CD4-positive, alpha-beta memory T cell (primary cell): ENCODE measurements at regions of chr19 and their contacts with region 1.

Region 1: DNA sequence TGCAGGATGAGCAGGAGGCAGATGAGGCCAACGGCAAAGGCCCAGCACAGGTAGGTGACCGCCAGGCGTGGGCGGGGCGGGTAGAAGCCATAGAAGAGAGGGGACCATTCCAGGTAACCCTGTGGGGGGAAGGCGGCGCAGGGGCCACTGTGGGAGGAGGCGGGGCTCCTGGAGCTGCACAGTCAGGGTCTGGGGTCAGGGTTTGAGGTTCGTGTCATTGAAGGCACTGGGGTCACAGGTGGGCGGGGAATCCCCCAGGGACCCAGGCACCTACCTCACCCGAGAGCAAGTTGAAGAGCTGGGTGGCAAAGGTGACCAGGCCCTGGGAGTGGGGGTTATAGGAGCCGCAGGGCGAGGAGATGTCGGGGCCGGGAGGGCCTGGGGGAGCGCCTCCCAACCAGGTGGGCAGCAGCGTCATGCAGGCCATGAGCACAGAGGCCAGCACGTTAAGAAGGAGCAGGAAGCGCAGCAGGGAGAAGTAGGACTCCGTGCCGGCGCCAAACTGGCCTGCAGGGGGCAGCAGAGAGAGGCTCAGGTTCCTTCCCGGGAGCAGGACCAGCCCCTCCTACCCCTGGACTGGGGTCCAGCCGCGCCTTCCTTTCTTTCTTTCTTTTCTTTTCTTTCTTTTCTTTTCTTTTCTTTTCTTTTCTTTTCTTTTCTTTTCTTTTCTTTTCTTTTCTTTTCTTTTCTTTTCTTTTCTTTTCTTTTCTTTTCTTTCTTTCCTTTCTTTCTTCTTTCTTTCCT is 4.6 kb downstream of the TMC4 start:
- DNase-seq: peak; percentile 79 to 83 (median 81)
- H3K4me3 ChIP-seq: no peak overlapping the region
- H3K4me3 Mint-ChIP-seq: peak overlapping the region in 2 of 8 donors; percentile 26 to 31
- H3K27ac ChIP-seq: no peak overlapping the region
- H3K27ac Mint-ChIP-seq: peak overlapping the region in 2 of 7 donors; percentile 41 to 58
- H3K4me1 ChIP-seq: peaks cover 23% of the 10 kb centered on the region
- H3K4me1 Mint-ChIP-seq: peaks cover 3 to 28% (median 11%) of the 10 kb centered on the region in 4 donors
- H3K27me3 ChIP-seq: no peaks in the 10 kb centered on the region
- H3K27me3 Mint-ChIP-seq: no peaks in the 10 kb centered on the region

Region 2: GRCh38 chr19:53977429-53977990 is 190.8 kb before region 1 on chr19:
- CTCF ChIA-PET with region 1: no interaction called
- POLR2A ChIA-PET with region 1: no interaction called
- intact Hi-C with region 1: no loop called
- DNase-seq: peak; percentile 57 to 77 (median 68)
- H3K4me3 ChIP-seq: peak overlapping the region; percentile 9 to 58
- H3K4me3 Mint-ChIP-seq: peak overlapping the region; percentile 69 to 91 (median 88)
- H3K27ac ChIP-seq: no peak overlapping the region
- H3K27ac Mint-ChIP-seq: peak overlapping the region in 3 of 7 donors; percentile 10 to 69 (median 66)
- H3K4me1 ChIP-seq: peaks cover 27% of the 10 kb centered on the region
- H3K4me1 Mint-ChIP-seq: peaks cover 13 to 43% (median 22%) of the 10 kb centered on the region in 4 donors
- H3K27me3 ChIP-seq: peaks cover 32% of the 10 kb centered on the region
- H3K27me3 Mint-ChIP-seq: peaks cover 43 to 53% of the 10 kb centered on the region in 2 donors

Region 3: GRCh38 chr19:54231077-54231931 is 63.0 kb after region 1 on chr19:
- CTCF ChIA-PET with region 1: interaction called, 7 read pairs
- POLR2A ChIA-PET with region 1: no interaction called
- intact Hi-C with region 1: loop called (anchors 1 kb)
- DNase-seq: peak; percentile 59 to 83 (median 75)
- H3K4me3 ChIP-seq: no peak overlapping the region
- H3K4me3 Mint-ChIP-seq: peak overlapping the region in 1 of 8 donors; percentile 41
- H3K27ac ChIP-seq: no peak overlapping the region
- H3K27ac Mint-ChIP-seq: no peak overlapping the region
- H3K4me1 ChIP-seq: peaks cover 6% of the 10 kb centered on the region
- H3K4me1 Mint-ChIP-seq: peaks cover 0 to 7% (median 3%) of the 10 kb centered on the region in 4 donors
- H3K27me3 ChIP-seq: no peaks in the 10 kb centered on the region
- H3K27me3 Mint-ChIP-seq: peaks cover 18 to 21% of the 10 kb centered on the region in 2 donors